IMR-90 (cell line): ENCODE measurements at regions of chr4 and their contacts with region 1.

Region 1: DNA sequence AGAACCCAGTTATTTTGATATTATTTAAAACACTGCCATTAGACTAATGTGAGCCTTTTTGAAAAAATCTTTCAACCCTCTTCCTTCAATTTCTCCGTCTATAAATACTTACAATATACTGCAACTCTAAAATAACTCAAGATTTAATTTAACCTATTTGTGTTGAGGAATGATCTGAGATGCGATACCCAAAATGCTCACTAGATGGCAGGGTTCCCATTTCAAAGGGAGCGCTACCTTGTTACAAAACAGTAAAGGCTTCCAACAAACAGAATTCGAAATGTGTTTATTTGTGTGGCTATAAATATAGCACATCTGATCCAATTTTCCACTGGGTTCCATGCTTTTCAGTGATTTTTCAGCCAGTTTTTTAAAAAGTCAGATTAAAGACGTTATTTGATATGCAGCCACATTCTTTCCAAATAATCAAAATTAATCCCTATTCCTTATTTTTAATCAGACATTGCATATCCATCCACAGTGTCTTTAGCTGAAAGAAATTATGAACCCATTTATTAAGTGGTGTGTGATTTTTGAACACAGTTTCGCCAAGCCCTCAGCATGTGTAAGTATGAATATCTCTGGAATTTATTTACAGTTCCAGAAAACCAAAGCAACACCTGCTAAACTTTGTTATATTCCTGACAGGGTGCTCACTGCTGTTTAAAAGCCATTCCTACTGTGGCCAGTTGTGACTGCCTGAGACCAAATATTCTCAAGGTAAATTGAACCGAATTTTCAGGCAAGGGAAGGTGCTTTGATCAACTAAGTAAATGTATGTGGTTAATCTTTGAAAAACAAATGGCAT is 668.0 kb upstream of the LCORL start:
- DNase-seq: peak; percentile 66
- ATAC-seq: peak; percentile 74; the same call in 1 of the 2 replicates
- H3K4me3 ChIP-seq: no peak overlapping the region
- H3K27ac ChIP-seq: no peak overlapping the region
- H3K4me1 ChIP-seq: no peaks in the 10 kb centered on the region
- H3K27me3 ChIP-seq: no peaks in the 10 kb centered on the region
- CTCF ChIP-seq: peak; percentile 82
- POLR2A ChIP-seq: no peak
- RAD21 ChIP-seq: peak; percentile 89

Region 2: DNA sequence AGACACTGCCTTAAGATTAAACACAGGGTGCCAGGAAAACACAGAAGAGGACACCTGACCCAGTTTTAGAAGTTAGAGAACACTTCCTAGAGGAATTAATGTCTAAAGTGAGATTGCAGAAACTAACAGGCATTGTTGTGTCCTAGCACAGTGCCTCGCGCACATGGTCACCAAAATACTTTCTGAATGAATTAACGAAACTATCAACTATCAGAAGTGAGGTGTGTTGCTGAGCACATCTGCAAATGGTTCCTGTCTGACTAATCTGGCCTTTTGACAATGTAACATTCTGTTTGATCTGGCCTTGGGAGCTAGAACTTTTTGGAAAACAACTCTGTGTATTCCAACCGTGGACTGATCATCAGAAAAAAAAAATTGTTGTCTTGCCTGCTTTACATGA is 111.2 kb before region 1 on chr4:
- CTCF ChIA-PET with region 1: no interaction called
- POLR2A ChIA-PET with region 1: no interaction called
- dilution Hi-C with region 1: no loop called
- in situ Hi-C with region 1: no loop called
- intact Hi-C with region 1: no loop called
- DNase-seq: no peak
- ATAC-seq: no peak
- H3K4me3 ChIP-seq: no peak overlapping the region
- H3K27ac ChIP-seq: no peak overlapping the region
- H3K4me1 ChIP-seq: no peaks in the 10 kb centered on the region
- H3K27me3 ChIP-seq: no peaks in the 10 kb centered on the region
- CTCF ChIP-seq: no peak
- POLR2A ChIP-seq: no peak
- RAD21 ChIP-seq: no peak

Region 3: GRCh38 chr4:18932730-18933339 is 243.3 kb after region 1 on chr4:
- CTCF ChIA-PET with region 1: no interaction called
- POLR2A ChIA-PET with region 1: no interaction called
- dilution Hi-C with region 1: no loop called
- in situ Hi-C with region 1: no loop called
- intact Hi-C with region 1: loop called (anchors 2 kb)
- DNase-seq: no peak
- ATAC-seq: no peak
- H3K4me3 ChIP-seq: no peak overlapping the region
- H3K27ac ChIP-seq: no peak overlapping the region
- H3K4me1 ChIP-seq: no peaks in the 10 kb centered on the region
- H3K27me3 ChIP-seq: no peaks in the 10 kb centered on the region
- CTCF ChIP-seq: no peak
- POLR2A ChIP-seq: no peak
- RAD21 ChIP-seq: no peak

Region 4: GRCh38 chr4:20305976-20306375 is 1616.5 kb after region 1 on chr4:
- CTCF ChIA-PET with region 1: no interaction called
- POLR2A ChIA-PET with region 1: no interaction called
- dilution Hi-C with region 1: no loop called
- in situ Hi-C with region 1: no loop called
- intact Hi-C with region 1: loop called (anchors 10 kb)
- DNase-seq: peak; percentile 59
- ATAC-seq: peak; percentile 65
- H3K4me3 ChIP-seq: no peak overlapping the region
- H3K27ac ChIP-seq: no peak overlapping the region
- H3K4me1 ChIP-seq: no peaks in the 10 kb centered on the region
- H3K27me3 ChIP-seq: no peaks in the 10 kb centered on the region
- CTCF ChIP-seq: peak; percentile 54
- POLR2A ChIP-seq: no peak
- RAD21 ChIP-seq: peak; percentile 47

Region 5: DNA sequence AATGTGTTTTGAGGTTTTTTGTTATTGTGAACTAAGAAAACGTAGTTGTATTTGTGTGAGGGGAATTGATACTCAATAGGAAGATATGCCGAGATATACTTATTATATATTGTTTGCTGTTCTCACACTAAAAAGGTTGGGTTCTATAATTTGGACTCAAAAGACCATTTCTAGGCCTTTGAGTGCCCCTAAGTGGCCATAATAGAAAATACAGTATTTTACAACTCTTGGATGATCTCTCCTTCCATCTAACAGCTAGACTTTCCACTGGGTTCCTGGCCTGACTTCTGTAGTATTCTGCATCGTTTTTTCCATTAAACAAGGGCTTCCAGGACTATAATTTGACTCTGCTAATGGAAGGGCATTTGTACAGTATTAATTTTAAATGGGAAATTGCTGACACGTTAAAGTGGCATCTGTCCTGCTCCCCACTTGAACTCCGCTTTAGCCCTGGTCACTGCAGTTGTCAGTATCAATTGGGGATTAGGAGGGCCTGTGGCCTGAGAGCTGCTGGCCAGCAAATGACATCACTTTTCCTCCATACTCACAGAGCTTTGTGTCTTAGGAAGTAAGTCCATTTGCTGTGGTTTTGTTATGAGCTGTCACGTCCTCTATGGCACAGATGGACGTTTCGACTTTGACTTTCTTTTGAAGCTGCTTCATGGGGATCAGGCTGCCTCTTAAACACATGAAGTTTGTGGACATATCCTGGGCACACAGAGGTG is 1739.1 kb after region 1 on chr4:
- CTCF ChIA-PET with region 1: no interaction called
- POLR2A ChIA-PET with region 1: no interaction called
- dilution Hi-C with region 1: no loop called
- in situ Hi-C with region 1: loop called (anchors 25 kb)
- intact Hi-C with region 1: loop called (anchors 2 kb)
- DNase-seq: peak; percentile 20
- ATAC-seq: peak; percentile 64
- H3K4me3 ChIP-seq: no peak overlapping the region
- H3K27ac ChIP-seq: no peak overlapping the region
- H3K4me1 ChIP-seq: no peaks in the 10 kb centered on the region; the same call in 1 of the 2 replicates
- H3K27me3 ChIP-seq: no peaks in the 10 kb centered on the region
- CTCF ChIP-seq: peak; percentile 50
- POLR2A ChIP-seq: no peak
- RAD21 ChIP-seq: peak; percentile 59

Region 6: DNA sequence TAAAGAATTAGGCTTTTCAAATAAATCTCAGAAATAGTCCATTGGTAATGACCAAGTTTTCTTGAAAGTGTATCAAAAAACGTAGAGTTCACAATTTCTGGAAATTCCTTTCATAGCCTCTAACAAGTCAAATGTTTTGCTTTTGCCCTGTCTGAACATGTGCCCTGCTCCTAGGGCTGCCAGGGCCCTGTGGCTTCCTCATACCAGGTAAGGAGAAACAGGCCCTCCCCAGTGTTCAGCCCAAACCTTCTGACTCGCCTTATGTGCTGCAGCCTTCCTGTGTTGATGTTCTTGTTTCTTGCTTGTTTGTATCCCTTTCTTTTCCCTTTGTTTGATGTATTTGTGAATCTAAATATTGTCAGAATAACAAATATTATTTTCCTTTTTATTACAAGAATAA is 1864.6 kb after region 1 on chr4:
- CTCF ChIA-PET with region 1: no interaction called
- POLR2A ChIA-PET with region 1: no interaction called
- dilution Hi-C with region 1: no loop called
- in situ Hi-C with region 1: loop called (anchors 25 kb)
- intact Hi-C with region 1: loop called (anchors 10 kb)
- DNase-seq: no peak
- ATAC-seq: no peak
- H3K4me3 ChIP-seq: no peak overlapping the region
- H3K27ac ChIP-seq: no peak overlapping the region
- H3K4me1 ChIP-seq: no peaks in the 10 kb centered on the region
- H3K27me3 ChIP-seq: no peaks in the 10 kb centered on the region
- CTCF ChIP-seq: no peak
- POLR2A ChIP-seq: no peak
- RAD21 ChIP-seq: no peak